Activated B cell treated with CpG ODN at 0.5 μM for 24 hours (primary cell): ENCODE measurements at regions of chr16 and their contacts with region 1.

Region 1: DNA sequence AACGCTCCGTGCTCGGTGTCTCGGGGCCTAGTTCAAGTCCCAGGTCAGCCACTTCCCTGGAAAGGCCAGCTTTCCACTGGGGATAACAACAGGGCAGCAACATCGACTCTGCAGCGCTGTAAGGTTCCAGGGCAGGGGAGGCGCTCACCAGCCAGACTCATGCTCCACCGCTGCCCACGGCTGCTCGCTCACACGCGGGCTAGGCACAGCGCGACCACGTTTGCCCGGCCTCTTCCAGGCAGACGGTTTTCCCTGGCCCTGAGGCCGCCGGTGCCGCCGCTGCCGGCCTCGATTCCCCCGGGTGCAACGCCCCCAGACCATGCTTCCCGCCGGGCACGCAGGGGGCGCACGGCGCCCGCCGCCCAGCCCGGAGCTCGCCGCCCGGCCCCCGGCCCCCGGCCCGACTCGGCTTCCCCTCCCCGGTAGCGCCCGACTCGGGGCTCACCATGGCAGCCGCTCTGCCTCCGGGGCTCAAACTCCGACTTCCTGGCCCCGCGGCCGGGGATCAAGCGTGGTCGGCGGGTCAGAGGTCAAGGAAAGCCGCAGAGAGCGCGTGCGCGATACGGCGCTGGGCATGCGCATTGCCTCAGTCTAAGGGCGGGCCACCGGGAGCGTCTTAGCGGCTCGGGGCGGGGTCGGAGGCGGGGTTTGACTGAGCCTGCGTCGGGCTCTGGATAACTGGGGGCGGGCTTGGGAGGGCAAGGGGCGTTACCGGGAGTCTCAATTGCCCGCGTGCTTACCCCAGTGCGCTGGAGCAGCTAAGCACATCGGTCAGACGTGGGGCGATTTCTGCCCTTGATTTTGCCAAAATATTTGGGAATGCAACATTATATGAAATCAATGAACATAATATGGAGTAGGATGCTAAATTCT is at the start of gene PAM16:
- DNase-seq: peak; percentile 99
- ATAC-seq: peak; percentile 93
- H3K4me3 Mint-ChIP-seq: peak within 1 kb of the TSS; percentile 91
- H3K27ac Mint-ChIP-seq: peak within 1 kb of the TSS; percentile 77
- H3K4me1 Mint-ChIP-seq: peaks cover 16% of the 10 kb centered on the region
- H3K27me3 Mint-ChIP-seq: no peaks in the 10 kb centered on the region
- CTCF ChIP-seq: no peak
- total RNA-seq, gene PAM16: 42.4 and 58.1 TPM in 2 replicates

Region 2: GRCh38 chr16:4271176-4272066 is 79.6 kb before region 1 on chr16:
- CTCF ChIA-PET with region 1: no interaction called
- POLR2A ChIA-PET with region 1: interaction called, 10 read pairs
- intact Hi-C with region 1: loop called (anchors 5 kb)
- DNase-seq: peak; percentile 82
- ATAC-seq: peak; percentile 81
- H3K4me3 Mint-ChIP-seq: peak overlapping the region; percentile 86
- H3K27ac Mint-ChIP-seq: peak overlapping the region; percentile 88
- H3K4me1 Mint-ChIP-seq: peaks cover 11% of the 10 kb centered on the region
- H3K27me3 Mint-ChIP-seq: no peaks in the 10 kb centered on the region
- CTCF ChIP-seq: no peak

Region 3: DNA sequence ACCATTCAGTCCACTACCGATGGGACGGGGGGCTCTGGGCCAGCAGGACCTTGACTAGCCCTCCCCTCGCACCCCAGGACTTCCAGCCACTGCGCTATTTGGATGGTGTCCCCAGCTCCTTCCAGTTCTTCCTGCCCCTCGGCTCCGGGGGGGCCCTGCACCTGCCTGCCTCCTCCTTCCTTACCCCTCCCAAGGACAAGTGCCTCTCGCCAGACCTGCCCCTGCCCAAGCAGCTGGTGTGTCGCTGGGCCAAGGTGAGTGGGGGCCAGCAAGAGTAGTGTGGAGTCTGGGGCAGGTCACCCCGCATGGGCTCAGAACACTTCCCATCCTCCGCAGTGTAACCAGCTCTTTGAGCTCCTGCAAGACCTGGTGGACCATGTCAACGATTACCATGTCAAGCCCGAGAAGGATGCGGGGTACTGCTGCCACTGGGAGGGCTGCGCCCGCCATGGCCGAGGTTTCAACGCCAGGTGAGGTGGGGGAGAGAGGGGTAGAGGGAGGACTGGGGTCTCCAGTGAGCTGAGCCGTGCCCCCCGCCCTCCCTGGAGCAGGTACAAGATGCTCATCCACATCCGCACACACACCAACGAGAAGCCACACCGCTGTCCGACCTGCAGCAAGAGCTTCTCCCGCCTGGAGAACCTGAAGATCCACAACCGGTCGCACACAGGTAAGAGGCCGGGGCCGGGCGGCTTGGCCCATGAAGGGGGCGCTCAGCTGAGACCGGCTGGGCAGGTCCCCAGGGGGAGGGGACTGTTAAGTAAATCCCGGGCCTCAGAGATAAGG is 16.1 kb before region 1 on chr16:
- CTCF ChIA-PET with region 1: no interaction called
- POLR2A ChIA-PET with region 1: no interaction called
- intact Hi-C with region 1: no loop called
- DNase-seq: no peak
- ATAC-seq: no peak
- H3K4me3 Mint-ChIP-seq: no peak overlapping the region
- H3K27ac Mint-ChIP-seq: no peak overlapping the region
- H3K4me1 Mint-ChIP-seq: no peaks in the 10 kb centered on the region
- H3K27me3 Mint-ChIP-seq: no peaks in the 10 kb centered on the region
- CTCF ChIP-seq: no peak

Region 4: GRCh38 chr16:4365014-4365406 is 14.0 kb after region 1 on chr16:
- CTCF ChIA-PET with region 1: no interaction called
- POLR2A ChIA-PET with region 1: interaction called, 4 read pairs
- intact Hi-C with region 1: loop called (anchors 2 kb)
- DNase-seq: peak; percentile 62
- ATAC-seq: peak; percentile 91
- H3K4me3 Mint-ChIP-seq: no peak overlapping the region
- H3K27ac Mint-ChIP-seq: peak overlapping the region; percentile 35
- H3K4me1 Mint-ChIP-seq: peaks cover 37% of the 10 kb centered on the region
- H3K27me3 Mint-ChIP-seq: no peaks in the 10 kb centered on the region
- CTCF ChIP-seq: no peak

Region 5: DNA sequence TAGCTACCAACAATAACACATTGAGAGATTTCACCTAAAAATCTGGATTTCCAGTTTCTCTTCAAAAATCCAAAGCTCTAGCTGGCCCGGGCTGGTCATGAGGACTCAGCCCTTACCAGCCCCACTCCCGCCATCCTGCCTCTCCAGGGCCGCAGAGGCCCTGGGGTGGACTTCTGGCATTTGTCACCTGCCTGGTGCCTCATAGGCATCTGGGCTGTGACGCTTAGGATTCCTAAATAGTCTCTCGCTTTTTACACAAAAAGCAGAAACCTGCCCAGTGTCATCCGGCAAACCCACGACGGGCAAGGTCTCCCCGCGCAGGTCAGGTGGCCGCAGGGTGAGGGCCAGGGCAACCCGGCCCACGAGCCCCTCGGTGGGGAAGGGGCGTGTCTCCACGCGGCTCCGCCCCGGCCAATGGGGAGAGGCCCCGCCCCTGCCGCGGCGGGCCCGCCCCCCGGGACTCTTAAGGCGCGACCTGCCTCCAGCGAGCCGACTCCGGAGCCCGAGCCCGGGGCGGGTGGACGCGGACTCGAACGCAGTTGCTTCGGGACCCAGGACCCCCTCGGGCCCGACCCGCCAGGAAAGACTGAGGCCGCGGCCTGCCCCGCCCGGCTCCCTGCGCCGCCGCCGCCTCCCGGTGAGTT is 20.5 kb after region 1 on chr16 and contains the start of gene VASN:
- CTCF ChIA-PET with region 1: no interaction called
- POLR2A ChIA-PET with region 1: no interaction called
- intact Hi-C with region 1: loop called (anchors 1 kb)
- DNase-seq: peak; percentile 79
- ATAC-seq: peak; percentile 92
- H3K4me3 Mint-ChIP-seq: peak within 1 kb of the TSS; percentile 80
- H3K27ac Mint-ChIP-seq: no peak within 1 kb of the TSS
- H3K4me1 Mint-ChIP-seq: peaks cover 22% of the 10 kb centered on the region
- H3K27me3 Mint-ChIP-seq: no peaks in the 10 kb centered on the region
- CTCF ChIP-seq: no peak
- total RNA-seq, gene VASN: 0.11 and 0.15 TPM in 2 replicates

Region 6: GRCh38 chr16:4416200-4417032 is 65.4 kb after region 1 on chr16 and contains the start of gene CORO7:
- CTCF ChIA-PET with region 1: no interaction called
- POLR2A ChIA-PET with region 1: interaction called, 6 read pairs
- intact Hi-C with region 1: loop called (anchors 5 kb)
- DNase-seq: peak; percentile 99
- ATAC-seq: peak; percentile 89
- H3K4me3 Mint-ChIP-seq: peak within 1 kb of the TSS; percentile 91
- H3K27ac Mint-ChIP-seq: peak within 1 kb of the TSS; percentile 95
- H3K4me1 Mint-ChIP-seq: peaks cover 36% of the 10 kb centered on the region
- H3K27me3 Mint-ChIP-seq: no peaks in the 10 kb centered on the region
- CTCF ChIP-seq: no peak
- total RNA-seq, gene CORO7: 74.6 and 86.6 TPM in 2 replicates

Region 7: DNA sequence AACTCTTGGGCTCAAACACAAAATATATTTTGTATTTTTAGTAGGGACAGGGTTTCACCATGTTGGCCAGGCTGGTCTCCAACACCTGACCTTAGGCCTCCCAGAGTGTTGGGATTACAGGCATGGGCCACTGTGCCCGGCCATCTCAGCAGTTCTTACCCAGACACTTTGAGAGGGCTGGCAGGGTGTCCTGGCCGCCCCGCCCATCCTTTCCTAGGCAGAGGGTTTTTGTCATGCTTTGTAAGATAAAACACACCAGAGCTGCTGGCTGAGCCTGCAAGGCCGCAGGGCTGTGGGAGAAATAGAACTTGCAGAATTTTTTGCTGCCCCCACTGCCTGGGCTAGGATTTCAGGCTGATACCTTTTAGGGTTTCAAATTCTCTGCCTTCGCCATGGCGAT is 577.2 kb after region 1 on chr16:
- CTCF ChIA-PET with region 1: no interaction called
- POLR2A ChIA-PET with region 1: interaction called, 13 read pairs
- intact Hi-C with region 1: no loop called
- DNase-seq: no peak
- ATAC-seq: no peak
- H3K4me3 Mint-ChIP-seq: no peak overlapping the region
- H3K27ac Mint-ChIP-seq: no peak overlapping the region
- H3K4me1 Mint-ChIP-seq: no peaks in the 10 kb centered on the region
- H3K27me3 Mint-ChIP-seq: peaks cover 14% of the 10 kb centered on the region
- CTCF ChIP-seq: no peak